ENCODE measurements at regions of chr16 and their contacts with region 1.

Region 1: DNA sequence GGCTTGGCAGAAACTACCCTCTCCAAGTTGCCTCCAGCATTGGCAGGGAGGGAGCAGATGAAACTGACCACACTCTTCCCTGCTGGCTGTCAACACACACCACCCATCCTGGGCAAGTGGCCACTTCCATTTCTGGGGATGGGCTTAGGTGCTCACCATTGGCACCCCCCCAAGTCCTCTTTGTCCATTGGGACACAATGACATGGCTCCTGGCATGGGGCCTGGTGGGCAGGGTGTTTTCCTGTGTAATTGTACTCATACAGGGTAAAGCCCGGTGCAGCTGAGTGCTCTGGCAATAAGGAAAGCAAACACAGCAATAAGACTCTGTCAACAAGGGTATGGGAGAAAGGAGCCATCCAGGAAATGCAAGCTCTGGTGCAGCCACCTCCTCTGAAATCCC is 22.6 kb downstream of the SCNN1B start:
- DNase-seq: no peak
- ATAC-seq: no peak
- H3K4me3 Mint-ChIP-seq: no peak overlapping the region
- H3K27ac Mint-ChIP-seq: no peak overlapping the region
- H3K4me1 Mint-ChIP-seq: peaks cover 7% of the 10 kb centered on the region
- H3K27me3 Mint-ChIP-seq: no peaks in the 10 kb centered on the region
- CTCF ChIP-seq: no peak

Region 2: GRCh38 chr16:23384878-23385277 is 60.1 kb after region 1 on chr16:
- CTCF ChIA-PET with region 1: no interaction called
- POLR2A ChIA-PET with region 1: no interaction called
- intact Hi-C with region 1: loop called (anchors 10 kb)
- DNase-seq: no peak
- ATAC-seq: no peak
- H3K4me3 Mint-ChIP-seq: no peak overlapping the region
- H3K27ac Mint-ChIP-seq: no peak overlapping the region
- H3K4me1 Mint-ChIP-seq: no peaks in the 10 kb centered on the region
- H3K27me3 Mint-ChIP-seq: no peaks in the 10 kb centered on the region
- CTCF ChIP-seq: no peak

Region 3: GRCh38 chr16:23615805-23616204 is 291.1 kb after region 1 on chr16:
- CTCF ChIA-PET with region 1: no interaction called
- POLR2A ChIA-PET with region 1: no interaction called
- intact Hi-C with region 1: no loop called
- DNase-seq: no peak
- ATAC-seq: no peak
- H3K4me3 Mint-ChIP-seq: no peak overlapping the region
- H3K27ac Mint-ChIP-seq: no peak overlapping the region
- H3K4me1 Mint-ChIP-seq: no peaks in the 10 kb centered on the region
- H3K27me3 Mint-ChIP-seq: no peaks in the 10 kb centered on the region
- CTCF ChIP-seq: no peak

Measured in activated CD8-positive, alpha-beta T cell treated with anti-CD3 and anti-CD28 coated beads for 36 hours (primary cell).